ENCODE measurements at regions of chr1 and their contacts with region 1.

Region 1: DNA sequence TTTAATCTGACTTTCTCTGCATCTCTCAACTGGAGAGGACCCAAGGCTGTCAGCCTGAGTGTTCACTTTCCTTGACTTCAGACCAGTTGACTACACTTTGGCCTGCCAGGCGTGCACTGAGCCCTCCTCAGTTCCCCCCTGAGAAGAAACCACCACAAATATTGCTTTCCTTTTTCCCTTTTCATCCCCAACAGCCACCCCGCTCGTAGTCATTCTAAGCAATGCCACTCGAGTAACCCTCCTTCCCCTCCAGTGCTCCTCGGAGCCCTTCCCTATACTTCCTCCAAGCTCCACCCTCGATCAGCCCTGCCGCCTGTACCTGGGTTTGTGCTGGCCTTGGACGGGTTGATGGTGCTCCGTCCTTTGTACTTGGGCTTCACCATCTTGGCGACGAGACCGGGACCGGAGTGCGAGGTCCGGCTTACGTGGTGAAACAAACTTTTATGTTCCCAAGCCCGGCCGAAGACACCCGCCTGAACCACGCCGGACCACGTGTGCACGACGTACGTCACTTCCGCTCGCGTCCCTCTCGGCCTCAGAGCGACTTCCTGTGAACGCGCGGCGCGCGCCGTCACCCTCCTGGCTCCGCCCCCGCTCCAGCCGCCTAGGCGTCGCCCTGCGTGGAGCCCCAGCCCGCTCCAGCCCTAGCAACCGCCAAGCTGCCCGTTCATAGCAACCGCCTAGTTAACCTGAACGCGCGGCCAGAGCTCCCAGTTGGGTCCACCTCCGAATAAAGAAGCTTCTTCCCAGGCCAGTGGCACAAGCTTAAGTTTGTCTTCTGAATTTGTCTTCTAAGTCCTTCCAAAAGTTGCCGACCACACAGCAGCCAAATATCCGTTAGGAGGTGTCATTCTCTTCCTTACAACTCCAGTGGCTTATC is at the start of gene GNL2:
- DNase-seq: peak; percentile 95
- H3K4me3 ChIP-seq: peak within 1 kb of the TSS; percentile 74 to 86
- H3K4me3 Mint-ChIP-seq: peak within 1 kb of the TSS; percentile 98 to 99 (median 99)
- H3K27ac ChIP-seq: peak within 1 kb of the TSS; percentile 89
- H3K27ac Mint-ChIP-seq: peak within 1 kb of the TSS; percentile 99 to 100 (median 99)
- H3K4me1 ChIP-seq: peaks cover 17% of the 10 kb centered on the region
- H3K4me1 Mint-ChIP-seq: peaks cover 18 to 36% (median 26%) of the 10 kb centered on the region in 4 donors
- H3K27me3 ChIP-seq: no peaks in the 10 kb centered on the region
- H3K27me3 Mint-ChIP-seq: no peaks in the 10 kb centered on the region
- total RNA-seq, gene GNL2: 33.9 to 37.1 TPM

Region 2: DNA sequence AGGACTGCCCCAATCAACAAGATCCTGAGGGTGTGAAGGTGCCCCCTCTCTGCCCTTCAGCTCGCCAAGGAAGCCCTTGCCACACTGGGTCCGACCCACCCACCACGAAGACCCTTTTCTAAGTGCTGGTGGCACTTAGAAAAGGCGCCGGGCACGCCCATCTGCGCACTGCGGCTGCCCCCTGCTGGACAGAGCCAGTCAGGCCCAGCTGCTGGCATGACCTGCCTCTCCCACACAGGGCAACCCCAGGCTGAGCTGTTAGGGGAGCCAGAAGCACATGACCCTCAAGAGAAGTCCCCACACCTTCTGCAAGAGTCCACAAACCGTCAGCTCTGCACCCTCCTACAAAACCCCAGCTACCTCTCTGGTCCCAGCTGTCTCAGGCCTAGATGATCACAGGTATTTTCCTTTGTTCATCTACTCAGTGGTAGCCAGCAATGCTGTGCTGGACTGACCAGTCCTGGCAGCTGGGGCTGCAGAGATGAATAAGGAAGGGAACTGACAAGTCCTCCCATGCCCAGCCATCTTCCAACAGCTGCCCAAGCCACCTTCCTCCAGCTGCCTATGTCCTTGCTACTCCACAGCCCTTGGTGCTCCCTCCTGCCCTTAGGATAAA is 161.3 kb before region 1 on chr1:
- CTCF ChIA-PET with region 1: no interaction called
- POLR2A ChIA-PET with region 1: no interaction called
- intact Hi-C with region 1: no loop called
- DNase-seq: peak; percentile 46 to 58 (median 56)
- H3K4me3 ChIP-seq: no peak overlapping the region
- H3K4me3 Mint-ChIP-seq: no peak overlapping the region
- H3K27ac ChIP-seq: no peak overlapping the region
- H3K27ac Mint-ChIP-seq: no peak overlapping the region
- H3K4me1 ChIP-seq: no peaks in the 10 kb centered on the region
- H3K4me1 Mint-ChIP-seq: no peaks in the 10 kb centered on the region
- H3K27me3 ChIP-seq: peaks cover 4% of the 10 kb centered on the region
- H3K27me3 Mint-ChIP-seq: peaks cover 11 to 31% of the 10 kb centered on the region in 2 donors

Region 3: DNA sequence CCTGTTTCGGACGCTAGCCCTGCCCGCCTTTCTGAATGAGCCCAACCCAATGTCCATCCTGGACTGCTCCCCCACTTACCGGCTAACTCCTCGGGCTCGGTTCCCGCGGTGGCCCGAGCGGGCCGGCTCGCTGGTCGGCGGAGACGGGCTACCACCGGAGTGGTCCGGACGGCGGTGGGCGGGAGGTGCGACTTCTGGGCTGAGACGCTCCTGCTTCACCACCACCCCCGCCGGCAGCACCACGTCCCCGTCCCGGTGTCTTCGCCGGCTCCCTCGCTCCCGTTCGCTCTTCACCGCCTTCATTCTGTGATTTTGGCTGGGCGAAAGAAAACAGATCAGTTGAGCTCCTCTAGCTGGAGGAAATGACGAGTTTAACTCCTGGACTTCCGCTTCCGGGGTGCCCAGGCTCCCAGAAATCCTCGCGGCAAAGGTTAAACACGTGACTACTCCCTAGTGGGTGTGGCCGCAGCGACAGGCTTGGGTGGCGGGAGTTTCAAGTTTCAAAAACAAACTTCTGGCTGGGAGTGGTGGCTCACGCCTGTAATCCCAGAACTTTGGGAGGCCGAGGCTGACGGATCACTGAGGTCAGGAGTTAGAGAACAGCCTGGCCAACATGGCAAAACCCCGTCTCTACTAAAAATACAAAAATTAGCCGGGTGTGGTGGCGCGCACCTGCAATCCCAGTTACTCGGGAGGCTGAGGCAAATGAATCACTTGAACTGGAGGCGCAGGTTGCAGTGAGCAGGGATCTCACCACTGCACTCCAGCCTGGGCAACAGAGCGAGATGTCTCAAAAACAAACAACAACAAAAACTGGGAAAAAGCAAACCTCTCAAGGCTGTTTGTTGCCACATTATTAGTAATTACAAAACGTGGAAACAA is 41.5 kb before region 1 on chr1 and contains the start of gene SNIP1:
- CTCF ChIA-PET with region 1: no interaction called
- POLR2A ChIA-PET with region 1: interaction called, 5 read pairs
- intact Hi-C with region 1: loop called (anchors 1 kb)
- DNase-seq: peak; percentile 90 to 96 (median 92)
- H3K4me3 ChIP-seq: peak within 1 kb of the TSS; percentile 96 to 99
- H3K4me3 Mint-ChIP-seq: peak within 1 kb of the TSS; percentile 95 to 100 (median 98)
- H3K27ac ChIP-seq: peak within 1 kb of the TSS; percentile 96
- H3K27ac Mint-ChIP-seq: peak within 1 kb of the TSS; percentile 81 to 100 (median 98)
- H3K4me1 ChIP-seq: peaks cover 30% of the 10 kb centered on the region
- H3K4me1 Mint-ChIP-seq: peaks cover 26 to 49% (median 36%) of the 10 kb centered on the region in 4 donors
- H3K27me3 ChIP-seq: no peaks in the 10 kb centered on the region
- H3K27me3 Mint-ChIP-seq: no peaks in the 10 kb centered on the region
- total RNA-seq, gene SNIP1: 29.8 to 30.2 TPM

Region 4: GRCh38 chr1:37616330-37616729 is 20.6 kb after region 1 on chr1:
- CTCF ChIA-PET with region 1: no interaction called
- POLR2A ChIA-PET with region 1: no interaction called
- intact Hi-C with region 1: no loop called
- DNase-seq: no peak
- H3K4me3 ChIP-seq: no peak overlapping the region
- H3K4me3 Mint-ChIP-seq: no peak overlapping the region
- H3K27ac ChIP-seq: no peak overlapping the region
- H3K27ac Mint-ChIP-seq: no peak overlapping the region
- H3K4me1 ChIP-seq: no peaks in the 10 kb centered on the region
- H3K4me1 Mint-ChIP-seq: no peaks in the 10 kb centered on the region
- H3K27me3 ChIP-seq: peaks cover 6% of the 10 kb centered on the region
- H3K27me3 Mint-ChIP-seq: peaks cover 34 to 38% of the 10 kb centered on the region in 2 donors

Measured in CD4-positive, alpha-beta memory T cell (primary cell).